H1 (cell line): ENCODE measurements at regions of chr20 and their contacts with region 1.

Region 1: DNA sequence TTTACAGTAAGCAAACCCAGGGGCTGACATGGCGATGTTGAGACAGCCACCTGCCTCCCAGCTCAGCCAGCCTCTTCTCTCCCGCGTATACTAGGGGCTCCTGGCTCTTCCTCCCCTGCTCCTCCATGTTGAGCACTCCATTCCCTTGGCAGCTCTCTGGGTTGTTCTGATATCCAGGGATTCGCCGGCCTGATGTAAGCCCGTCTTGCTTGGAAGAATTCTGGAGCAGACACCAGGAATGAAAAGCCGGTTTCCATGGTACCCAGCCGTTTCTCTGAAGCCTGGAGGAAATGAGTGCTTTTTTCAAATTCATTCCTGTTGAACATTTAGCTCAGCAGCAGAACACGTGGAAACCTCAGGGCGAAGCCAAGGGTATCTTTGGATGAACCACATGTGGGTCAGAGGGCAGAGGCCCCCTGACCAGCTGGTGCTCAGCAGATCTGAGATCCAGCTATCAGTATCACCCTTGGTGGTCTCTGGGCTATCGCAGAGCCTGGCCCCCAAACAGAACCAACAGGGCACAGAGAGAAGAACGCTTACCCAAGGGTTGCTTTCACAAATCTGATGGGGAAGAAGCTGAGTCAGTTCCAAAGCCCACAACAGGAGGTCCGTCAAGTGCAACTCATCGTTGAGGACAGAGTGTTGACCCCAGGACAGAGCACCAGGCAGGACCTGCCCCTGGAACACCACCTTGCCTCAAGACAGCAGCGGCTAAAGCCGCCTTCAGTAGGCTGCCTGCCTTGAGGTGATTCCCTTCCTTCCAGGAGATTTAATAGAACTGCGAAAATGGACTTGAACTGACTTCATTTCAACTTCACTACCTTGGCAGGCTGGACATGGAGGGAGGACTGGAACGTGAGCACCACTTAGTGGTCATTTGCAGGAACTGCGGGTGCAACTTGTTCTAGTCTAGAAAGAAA is 96.1 kb upstream of the RIN2 start:
- DNase-seq: peak; percentile 34 to 74
- H3K4me3 ChIP-seq: no peak overlapping the region
- H3K27ac ChIP-seq: no peak overlapping the region
- H3K4me1 ChIP-seq: peaks cover 0 to 9% (median 1%) of the 10 kb centered on the region in 4 experiments; a peak in 2 of 7 replicates
- H3K27me3 ChIP-seq: 0 out of 7 replicates have a peak, but pooled peaks cover 0 to 3% (median 0%) of the 10 kb centered on the region in 4 experiments
- CTCF ChIP-seq: peak; percentile 79 to 93 (median 88)
- EP300 ChIP-seq: no peak
- POLR2A ChIP-seq: no peak
- RAD21 ChIP-seq: peak; percentile 98 to 99

Region 2: DNA sequence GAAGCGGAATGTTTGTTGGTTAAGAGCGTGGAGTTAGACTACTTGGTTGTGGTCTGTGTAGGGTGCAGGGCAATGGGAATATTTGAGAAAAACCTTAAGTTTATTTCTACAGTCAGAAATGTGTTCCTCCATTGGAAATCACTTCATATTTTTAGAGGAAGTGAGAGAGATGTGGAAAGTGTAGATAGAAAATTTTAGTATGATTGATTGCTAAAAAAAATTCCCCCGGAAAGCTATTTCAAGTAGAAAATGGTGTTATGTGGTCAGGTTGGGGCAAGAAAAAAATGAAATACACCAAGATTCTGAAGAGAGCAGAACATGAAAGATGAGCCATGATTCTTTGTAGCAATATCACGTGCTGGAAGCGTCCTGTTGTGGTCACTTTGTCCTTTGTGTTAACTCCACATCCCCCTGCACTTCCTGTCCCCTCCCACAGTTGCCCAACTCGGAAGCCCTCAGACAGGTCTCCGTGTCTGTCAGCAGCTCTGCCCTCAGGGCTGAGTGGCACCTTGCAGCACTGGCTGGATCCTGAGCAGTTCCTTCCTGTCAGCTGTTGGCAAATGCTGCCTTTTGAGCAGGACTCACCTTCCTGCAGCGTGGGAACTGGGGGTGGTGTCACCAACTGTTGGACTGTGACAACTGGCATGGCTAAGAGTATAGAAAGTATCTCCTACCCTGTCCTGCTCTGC is 587.0 kb before region 1 on chr20:
- CTCF ChIA-PET with region 1: interaction called, 33 read pairs
- POLR2A ChIA-PET with region 1: no interaction called
- DNase-seq: peak in 1 of 2 experiments; percentile 20
- H3K4me3 ChIP-seq: no peak overlapping the region
- H3K27ac ChIP-seq: no peak overlapping the region
- H3K4me1 ChIP-seq: no peaks in the 10 kb centered on the region
- H3K27me3 ChIP-seq: no peaks in the 10 kb centered on the region
- CTCF ChIP-seq: no peak
- EP300 ChIP-seq: no peak
- POLR2A ChIP-seq: no peak
- RAD21 ChIP-seq: no peak

Region 3: GRCh38 chr20:19583532-19584175 is 78.3 kb before region 1 on chr20:
- CTCF ChIA-PET with region 1: interaction called, 11 read pairs
- POLR2A ChIA-PET with region 1: no interaction called
- DNase-seq: peak; percentile 72 to 96
- H3K4me3 ChIP-seq: no peak overlapping the region
- H3K27ac ChIP-seq: no peak overlapping the region
- H3K4me1 ChIP-seq: peaks cover 0 to 5% (median 3%) of the 10 kb centered on the region in 4 experiments; a peak in 5 of 7 replicates
- H3K27me3 ChIP-seq: no peaks in the 10 kb centered on the region
- CTCF ChIP-seq: peak; percentile 86 to 99 (median 98)
- EP300 ChIP-seq: no peak
- POLR2A ChIP-seq: no peak
- RAD21 ChIP-seq: peak; percentile 95 to 97

Region 4: GRCh38 chr20:19628570-19629169 is 33.3 kb before region 1 on chr20:
- CTCF ChIA-PET with region 1: interaction called, 85 read pairs
- POLR2A ChIA-PET with region 1: no interaction called
- DNase-seq: peak; percentile 36 to 84
- H3K4me3 ChIP-seq: no peak overlapping the region
- H3K27ac ChIP-seq: no peak overlapping the region
- H3K4me1 ChIP-seq: no peaks in the 10 kb centered on the region
- H3K27me3 ChIP-seq: no peaks in the 10 kb centered on the region
- CTCF ChIP-seq: peak; percentile 33 to 78 (median 69)
- EP300 ChIP-seq: no peak
- POLR2A ChIP-seq: no peak
- RAD21 ChIP-seq: peak; percentile 48 to 64

Region 5: GRCh38 chr20:19644085-19644484 is 17.9 kb before region 1 on chr20:
- CTCF ChIA-PET with region 1: interaction called, 20 read pairs
- POLR2A ChIA-PET with region 1: no interaction called
- DNase-seq: no peak
- H3K4me3 ChIP-seq: no peak overlapping the region
- H3K27ac ChIP-seq: no peak overlapping the region
- H3K4me1 ChIP-seq: no peaks in the 10 kb centered on the region
- H3K27me3 ChIP-seq: no peaks in the 10 kb centered on the region
- CTCF ChIP-seq: no peak
- EP300 ChIP-seq: no peak
- POLR2A ChIP-seq: no peak
- RAD21 ChIP-seq: no peak

Region 6: GRCh38 chr20:19699180-19699971 is 37.4 kb after region 1 on chr20:
- CTCF ChIA-PET with region 1: no interaction called
- POLR2A ChIA-PET with region 1: no interaction called
- DNase-seq: no peak
- H3K4me3 ChIP-seq: no peak overlapping the region
- H3K27ac ChIP-seq: no peak overlapping the region
- H3K4me1 ChIP-seq: no peaks in the 10 kb centered on the region
- H3K27me3 ChIP-seq: no peaks in the 10 kb centered on the region
- CTCF ChIP-seq: no peak
- EP300 ChIP-seq: no peak
- POLR2A ChIP-seq: no peak
- RAD21 ChIP-seq: no peak